ENCODE measurements at regions of chr10 and their contacts with region 1.

Region 1: DNA sequence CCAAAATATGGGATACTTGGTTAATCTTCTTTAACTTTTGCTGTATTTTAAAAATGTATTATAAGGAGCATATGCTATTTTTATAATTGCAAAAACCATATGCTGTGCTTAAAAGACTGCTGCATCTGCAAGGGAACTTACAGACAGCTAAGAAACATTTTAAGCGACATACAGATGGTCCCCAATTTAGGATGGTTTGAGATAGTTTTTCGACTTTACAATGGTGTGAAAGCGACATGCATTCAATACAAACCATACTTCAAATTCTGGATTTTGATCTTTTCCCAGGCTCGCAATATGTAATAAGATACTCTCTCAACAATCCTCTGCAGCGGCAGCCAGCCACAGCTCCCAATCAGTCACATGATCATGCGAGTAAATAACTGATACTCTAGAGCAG is 73.2 kb downstream of the SHTN1 start:
- DNase-seq: no peak
- ATAC-seq: no peak

Region 2: DNA sequence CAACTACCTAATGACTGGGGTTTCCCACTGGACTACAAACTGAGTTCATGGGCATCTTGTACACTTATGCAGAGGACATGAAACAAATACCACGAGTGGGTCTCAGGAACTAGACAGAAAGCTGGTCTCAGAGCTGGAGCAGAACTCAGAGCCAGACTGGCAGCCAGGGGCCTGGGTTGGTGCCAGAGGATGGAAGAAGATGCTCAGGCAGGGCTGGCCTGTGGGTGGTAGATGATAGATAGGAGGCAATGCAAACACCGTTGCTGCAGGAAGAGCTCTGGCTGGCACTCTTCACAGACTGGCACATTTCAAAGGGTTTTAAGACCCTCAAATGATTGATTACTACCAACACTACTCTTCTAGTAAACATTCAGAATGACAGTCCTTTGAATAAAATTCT is 53.7 kb before region 1 on chr10:
- intact Hi-C with region 1: no loop called
- DNase-seq: no peak
- ATAC-seq: no peak

Region 3: DNA sequence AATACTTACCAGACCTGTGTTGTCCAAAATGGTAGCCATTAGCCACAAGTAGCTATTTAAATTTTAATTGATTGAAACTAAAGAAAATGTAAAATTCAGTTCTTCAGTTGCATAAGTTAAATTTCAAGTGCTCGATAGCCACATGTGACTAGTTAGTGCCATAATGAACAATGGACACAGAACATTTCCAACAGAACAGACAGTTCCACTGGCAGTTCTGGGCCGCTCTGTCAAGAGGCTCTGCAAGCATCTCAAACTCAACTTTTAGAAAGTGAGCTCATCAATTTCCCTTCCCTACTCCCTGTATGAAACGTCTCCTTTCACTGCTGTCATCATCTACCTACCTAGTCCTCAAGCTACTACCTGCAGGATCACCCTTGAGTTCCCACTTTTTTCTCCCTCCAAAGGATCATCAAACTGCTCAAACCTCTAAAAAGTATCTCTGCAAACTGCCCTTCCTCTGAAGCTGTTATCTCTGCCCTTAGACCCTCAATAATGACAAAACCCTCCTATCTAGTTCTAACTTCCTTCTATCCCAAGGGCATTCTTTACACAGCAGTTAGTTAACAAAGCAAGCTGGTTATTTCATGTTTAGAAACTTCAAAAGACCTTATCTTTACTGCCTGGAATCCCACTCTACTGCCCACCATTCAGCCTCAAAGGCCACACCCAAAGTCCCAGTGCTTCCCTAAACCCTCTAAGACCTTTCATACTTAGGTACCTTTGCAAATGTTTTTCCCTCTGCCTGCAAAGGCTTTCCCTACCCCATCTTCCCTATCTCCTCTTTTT is 52.6 kb after region 1 on chr10:
- intact Hi-C with region 1: loop called (anchors 5 kb)
- DNase-seq: no peak
- ATAC-seq: no peak

Region 4: DNA sequence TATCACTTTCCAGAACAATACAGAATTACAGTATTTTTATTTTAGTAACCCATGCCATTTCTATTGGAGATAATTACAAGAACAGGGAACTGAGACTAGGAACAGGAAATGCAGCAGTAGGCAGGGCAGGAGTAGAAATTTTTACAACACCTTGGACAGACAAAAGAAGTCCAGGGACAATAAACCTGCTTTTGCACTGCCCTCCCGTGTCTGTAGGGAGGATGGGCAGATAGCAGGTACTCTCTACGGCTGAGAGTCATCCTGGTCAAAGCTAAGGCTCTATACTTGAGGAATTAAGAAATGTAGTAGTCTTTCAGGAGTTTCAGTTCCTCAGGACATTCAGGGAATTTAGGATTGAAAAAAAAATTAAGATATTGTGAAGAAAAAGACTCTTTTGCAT is 142.8 kb after region 1 on chr10:
- intact Hi-C with region 1: no loop called
- DNase-seq: no peak
- ATAC-seq: no peak

Region 5: DNA sequence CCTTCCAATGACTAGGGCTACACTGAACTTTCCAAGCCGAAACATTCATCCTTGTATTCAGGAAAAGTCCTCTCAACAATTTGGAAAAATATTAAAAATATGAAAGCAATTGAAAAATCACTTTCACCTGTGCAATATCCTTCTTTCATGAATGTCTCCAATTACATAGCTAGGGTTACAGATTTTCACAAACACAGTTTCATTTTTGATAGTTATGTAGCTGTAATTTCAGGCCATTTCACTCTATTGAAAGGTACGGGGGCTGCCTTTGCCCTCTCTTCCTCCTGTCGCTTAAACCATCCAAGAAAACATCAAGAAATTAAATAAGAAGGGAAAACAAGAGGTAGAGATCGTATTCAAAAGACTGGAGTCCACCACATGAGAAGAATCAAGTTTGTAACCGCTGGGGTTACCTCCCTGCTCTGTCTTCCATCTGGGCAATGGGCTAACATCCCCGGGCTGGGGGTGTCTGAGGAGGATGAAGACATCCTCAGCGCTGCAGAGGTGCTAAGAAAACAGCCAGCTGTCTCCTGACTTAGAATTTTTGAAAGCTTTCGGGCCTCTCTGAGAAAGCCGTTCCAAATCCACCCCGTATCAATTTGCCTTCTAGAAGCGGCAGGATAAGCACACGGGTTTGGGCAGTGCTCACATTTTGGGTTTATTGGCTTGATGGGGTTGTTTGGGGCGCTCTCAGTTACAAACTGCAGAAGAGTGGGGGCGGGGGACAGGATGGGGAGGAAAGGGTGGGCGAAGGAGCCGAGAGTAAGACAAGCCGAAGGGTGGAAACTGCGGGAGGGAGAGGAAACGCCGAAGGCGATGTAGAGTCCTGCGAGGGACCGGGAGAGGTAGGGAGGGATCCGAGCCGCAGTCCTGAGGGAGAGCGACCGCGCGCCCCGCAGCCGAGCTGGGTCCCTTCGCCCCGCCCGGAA is 230.6 kb after region 1 on chr10:
- intact Hi-C with region 1: no loop called
- DNase-seq: no peak
- ATAC-seq: no peak